ENCODE measurements at regions of chr9 and their contacts with region 1.

Region 1: GRCh38 chr9:73683862-73684591 is 532.4 kb downstream of the ANXA1 start:
- DNase-seq: peak; percentile 55
- ATAC-seq: peak; percentile 94
- H3K4me3 ChIP-seq: no peak overlapping the region
- H3K27ac ChIP-seq: no peak overlapping the region
- H3K4me1 ChIP-seq: peaks cover 10% of the 10 kb centered on the region
- H3K27me3 ChIP-seq: no peaks in the 10 kb centered on the region
- CTCF ChIP-seq: peak; percentile 75
- EP300 ChIP-seq: no peak
- POLR2A ChIP-seq: no peak
- RAD21 ChIP-seq: peak; percentile 56

Region 2: GRCh38 chr9:73451003-73451402 is 233.0 kb before region 1 on chr9:
- CTCF ChIA-PET with region 1: no interaction called
- POLR2A ChIA-PET with region 1: no interaction called
- in situ Hi-C with region 1: no loop called
- intact Hi-C with region 1: no loop called
- DNase-seq: no peak
- ATAC-seq: no peak
- H3K4me3 ChIP-seq: no peak overlapping the region
- H3K27ac ChIP-seq: no peak overlapping the region
- H3K4me1 ChIP-seq: no peaks in the 10 kb centered on the region
- H3K27me3 ChIP-seq: no peaks in the 10 kb centered on the region
- CTCF ChIP-seq: no peak
- EP300 ChIP-seq: no peak
- POLR2A ChIP-seq: no peak
- RAD21 ChIP-seq: no peak

Region 3: DNA sequence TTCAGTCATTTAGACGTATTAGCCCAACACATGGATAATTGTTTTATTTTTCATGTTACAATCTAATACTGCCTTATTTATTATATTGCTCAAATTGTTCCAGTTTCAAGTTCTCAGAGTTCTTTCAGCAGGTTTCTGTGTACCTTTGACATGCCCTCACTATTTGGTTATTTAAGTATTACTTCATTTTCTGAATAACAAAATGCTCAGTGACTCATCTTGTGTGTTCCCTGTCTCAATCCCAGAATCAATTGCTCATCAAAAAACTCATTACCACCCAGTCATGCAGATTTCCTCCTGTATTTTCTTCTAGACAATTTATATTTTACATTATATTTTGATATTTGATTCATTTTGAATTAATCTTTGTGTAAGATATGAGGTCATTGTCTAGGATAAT is 30.3 kb after region 1 on chr9:
- CTCF ChIA-PET with region 1: no interaction called
- POLR2A ChIA-PET with region 1: no interaction called
- in situ Hi-C with region 1: no loop called
- intact Hi-C with region 1: no loop called
- DNase-seq: no peak
- ATAC-seq: no peak
- H3K4me3 ChIP-seq: no peak overlapping the region
- H3K27ac ChIP-seq: no peak overlapping the region
- H3K4me1 ChIP-seq: no peaks in the 10 kb centered on the region
- H3K27me3 ChIP-seq: no peaks in the 10 kb centered on the region
- CTCF ChIP-seq: no peak
- EP300 ChIP-seq: no peak
- POLR2A ChIP-seq: no peak
- RAD21 ChIP-seq: no peak

Region 4: DNA sequence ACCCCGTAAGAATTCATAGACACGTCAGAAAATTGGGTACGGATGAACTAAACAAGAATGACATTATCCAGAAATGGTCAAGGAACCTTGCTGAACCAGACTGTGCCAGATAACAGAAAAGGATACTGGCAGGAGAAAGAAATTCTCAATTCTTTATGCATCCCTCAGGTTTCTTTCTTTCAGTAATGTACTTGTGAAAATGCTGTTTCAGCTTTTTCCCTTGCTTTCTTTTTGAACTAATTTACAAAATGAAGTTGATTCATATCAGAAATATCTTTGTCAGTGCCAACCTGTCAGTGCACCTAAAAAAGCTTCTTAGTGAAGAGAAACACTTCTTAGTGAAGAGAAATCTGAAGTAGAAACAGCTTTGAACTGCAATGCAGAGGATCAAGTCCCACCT is 169.5 kb after region 1 on chr9:
- CTCF ChIA-PET with region 1: no interaction called
- POLR2A ChIA-PET with region 1: no interaction called
- in situ Hi-C with region 1: no loop called
- intact Hi-C with region 1: no loop called
- DNase-seq: no peak
- ATAC-seq: no peak
- H3K4me3 ChIP-seq: no peak overlapping the region
- H3K27ac ChIP-seq: no peak overlapping the region
- H3K4me1 ChIP-seq: no peaks in the 10 kb centered on the region
- H3K27me3 ChIP-seq: no peaks in the 10 kb centered on the region
- CTCF ChIP-seq: no peak
- EP300 ChIP-seq: no peak
- POLR2A ChIP-seq: no peak
- RAD21 ChIP-seq: no peak

Region 5: DNA sequence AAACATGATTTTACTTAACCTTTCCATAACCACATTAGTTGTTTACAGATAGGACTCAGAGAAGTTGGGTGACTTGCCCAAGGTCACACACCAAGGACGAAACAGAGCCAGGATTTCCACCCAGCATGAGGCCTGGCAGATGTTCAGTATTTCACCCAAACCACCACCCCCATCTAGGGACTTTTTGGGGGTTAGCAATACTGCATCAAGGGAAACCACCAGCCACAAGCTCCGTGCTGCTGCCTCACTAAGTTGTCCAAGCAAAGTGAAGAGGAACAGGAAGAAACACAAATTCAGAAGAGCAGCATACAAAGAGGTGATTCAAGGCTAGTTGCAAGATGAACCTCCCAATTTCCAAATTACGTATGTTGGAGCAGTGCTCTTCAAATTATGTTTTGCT is 593.5 kb after region 1 on chr9:
- CTCF ChIA-PET with region 1: interaction called, 11 read pairs
- POLR2A ChIA-PET with region 1: no interaction called
- in situ Hi-C with region 1: loop called (anchors 25 kb)
- intact Hi-C with region 1: loop called (anchors 1 kb)
- DNase-seq: no peak
- ATAC-seq: no peak
- H3K4me3 ChIP-seq: no peak overlapping the region
- H3K27ac ChIP-seq: no peak overlapping the region
- H3K4me1 ChIP-seq: no peaks in the 10 kb centered on the region
- H3K27me3 ChIP-seq: no peaks in the 10 kb centered on the region
- CTCF ChIP-seq: no peak
- EP300 ChIP-seq: no peak
- POLR2A ChIP-seq: no peak
- RAD21 ChIP-seq: no peak

Region 6: DNA sequence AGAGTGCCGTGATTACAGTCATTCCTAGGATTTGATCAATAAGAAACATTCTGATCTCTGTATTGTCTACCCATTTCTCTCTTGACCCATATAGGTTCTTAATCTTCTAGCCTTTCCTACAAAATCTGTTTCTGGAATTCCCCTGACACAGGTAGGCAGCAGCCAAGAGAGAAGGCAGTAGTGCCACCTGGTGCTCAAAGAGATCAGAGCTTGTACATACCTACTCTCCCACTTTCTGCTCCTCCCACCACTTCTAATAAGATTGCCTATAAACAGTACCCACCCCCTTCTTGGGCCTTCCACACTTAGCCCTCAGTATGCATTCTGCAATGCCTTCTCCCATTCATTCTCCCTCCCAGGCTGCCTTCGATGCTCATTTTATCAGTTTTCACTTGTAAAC is 695.7 kb after region 1 on chr9:
- CTCF ChIA-PET with region 1: interaction called, 19 read pairs
- POLR2A ChIA-PET with region 1: no interaction called
- in situ Hi-C with region 1: loop called (anchors 5 kb)
- intact Hi-C with region 1: loop called (anchors 1 kb)
- DNase-seq: peak; percentile 40
- ATAC-seq: peak; percentile 94
- H3K4me3 ChIP-seq: no peak overlapping the region
- H3K27ac ChIP-seq: no peak overlapping the region
- H3K4me1 ChIP-seq: no peaks in the 10 kb centered on the region
- H3K27me3 ChIP-seq: no peaks in the 10 kb centered on the region
- CTCF ChIP-seq: peak; percentile 72
- EP300 ChIP-seq: no peak
- POLR2A ChIP-seq: no peak
- RAD21 ChIP-seq: 0 out of 2 replicates have a peak, but pooled peaks have one; percentile 43

Region 7: DNA sequence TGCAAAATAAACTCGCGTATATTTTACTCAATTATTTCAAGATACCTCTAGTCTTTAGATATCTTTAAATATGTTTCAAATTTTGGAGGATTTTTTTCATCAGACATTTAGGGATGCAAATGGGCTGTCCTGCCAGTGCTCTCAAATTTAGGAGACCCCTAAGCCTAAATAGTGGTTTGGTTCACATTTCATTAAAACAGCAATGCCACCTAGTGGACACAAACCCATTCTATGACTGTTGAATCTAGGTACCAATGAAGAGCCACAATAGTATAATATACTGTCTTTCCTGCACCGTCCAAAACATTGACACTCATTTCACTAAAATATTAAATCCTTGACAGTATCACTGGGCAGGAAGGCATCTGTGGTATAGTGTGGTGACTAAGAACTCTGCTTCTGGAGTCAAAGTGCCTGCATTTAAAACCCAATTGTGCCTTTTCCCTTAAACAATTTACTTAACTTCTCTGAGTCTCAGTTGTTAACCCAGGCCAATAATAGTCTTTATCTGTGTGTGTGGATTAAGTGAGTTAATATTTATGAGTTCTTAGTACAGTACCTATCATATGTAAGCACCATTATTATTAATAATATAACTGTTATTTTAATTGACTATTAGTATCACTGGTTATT is 961.1 kb after region 1 on chr9:
- CTCF ChIA-PET with region 1: interaction called, 4 read pairs
- POLR2A ChIA-PET with region 1: no interaction called
- in situ Hi-C with region 1: no loop called
- intact Hi-C with region 1: loop called (anchors 1 kb)
- DNase-seq: peak; percentile 18
- ATAC-seq: peak; percentile 73
- H3K4me3 ChIP-seq: no peak overlapping the region
- H3K27ac ChIP-seq: no peak overlapping the region
- H3K4me1 ChIP-seq: no peaks in the 10 kb centered on the region
- H3K27me3 ChIP-seq: peaks cover 0 to 6% of the 10 kb centered on the region in 2 experiments; a peak in 1 of 5 replicates
- CTCF ChIP-seq: peak; percentile 59
- EP300 ChIP-seq: no peak
- POLR2A ChIP-seq: no peak
- RAD21 ChIP-seq: no peak

Region 8: GRCh38 chr9:74742792-74743730 is 1059.0 kb after region 1 on chr9:
- CTCF ChIA-PET with region 1: no interaction called
- POLR2A ChIA-PET with region 1: no interaction called
- in situ Hi-C with region 1: no loop called
- intact Hi-C with region 1: loop called (anchors 5 kb)
- DNase-seq: peak; percentile 2
- ATAC-seq: peak; percentile 48; the same call in 1 of the 3 replicates
- H3K4me3 ChIP-seq: no peak overlapping the region
- H3K27ac ChIP-seq: no peak overlapping the region
- H3K4me1 ChIP-seq: no peaks in the 10 kb centered on the region
- H3K27me3 ChIP-seq: no peaks in the 10 kb centered on the region
- CTCF ChIP-seq: peak; percentile 64
- EP300 ChIP-seq: no peak
- POLR2A ChIP-seq: no peak
- RAD21 ChIP-seq: no peak

Measured in HepG2 (cell line).